Activated B cell treated with CpG ODN at 0.5 μM for 24 hours (primary cell): ENCODE measurements at regions of chr11 and their contacts with region 1.

Region 1: DNA sequence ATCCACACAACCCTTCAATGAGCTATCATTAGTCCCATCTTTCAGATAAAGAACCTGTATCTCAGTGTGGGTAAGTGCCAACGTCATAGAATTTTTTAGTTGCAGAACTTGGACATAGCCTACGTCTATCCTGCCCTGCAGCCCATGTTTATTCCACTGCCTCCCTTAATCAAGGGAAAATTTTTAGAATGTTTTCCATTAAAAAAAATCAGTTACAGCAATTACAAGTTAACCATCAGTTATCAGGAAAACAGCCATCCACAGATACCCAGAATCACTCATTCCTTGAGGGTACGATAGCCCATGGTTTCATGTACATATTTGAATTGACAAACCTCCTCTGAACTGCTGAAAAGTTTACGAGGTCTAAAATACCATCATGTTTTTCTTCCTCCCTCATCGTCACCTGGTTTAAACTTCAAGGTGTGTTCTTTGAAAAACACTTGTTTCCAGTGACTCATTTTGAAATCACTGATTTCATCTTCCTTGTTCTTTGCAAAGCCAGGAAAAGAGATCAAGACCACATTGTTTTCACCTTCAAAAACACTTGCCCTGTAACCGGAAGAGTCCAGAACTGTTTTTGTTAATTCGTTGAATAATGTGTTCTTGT is 100.9 kb downstream of the FAM76B start:
- DNase-seq: no peak
- ATAC-seq: no peak
- H3K4me3 Mint-ChIP-seq: no peak overlapping the region
- H3K27ac Mint-ChIP-seq: no peak overlapping the region
- H3K4me1 Mint-ChIP-seq: peaks cover under 1% of the 10 kb centered on the region
- H3K27me3 Mint-ChIP-seq: no peaks in the 10 kb centered on the region
- CTCF ChIP-seq: no peak

Region 2: GRCh38 chr11:95647355-95647754 is 41.3 kb before region 1 on chr11:
- CTCF ChIA-PET with region 1: no interaction called
- POLR2A ChIA-PET with region 1: interaction called, 3 read pairs
- intact Hi-C with region 1: loop called (anchors 5 kb)
- DNase-seq: no peak
- ATAC-seq: no peak
- H3K4me3 Mint-ChIP-seq: no peak overlapping the region
- H3K27ac Mint-ChIP-seq: no peak overlapping the region
- H3K4me1 Mint-ChIP-seq: peaks cover 5% of the 10 kb centered on the region
- H3K27me3 Mint-ChIP-seq: no peaks in the 10 kb centered on the region
- CTCF ChIP-seq: no peak

Region 3: GRCh38 chr11:95699631-95700470 is 11.2 kb after region 1 on chr11:
- CTCF ChIA-PET with region 1: interaction called, 33 read pairs
- POLR2A ChIA-PET with region 1: interaction called, 19 read pairs
- intact Hi-C with region 1: loop called (anchors 1 kb)
- DNase-seq: no peak
- ATAC-seq: peak; percentile 65
- H3K4me3 Mint-ChIP-seq: peak overlapping the region; percentile 66
- H3K27ac Mint-ChIP-seq: peak overlapping the region; percentile 98
- H3K4me1 Mint-ChIP-seq: peaks cover 52% of the 10 kb centered on the region
- H3K27me3 Mint-ChIP-seq: no peaks in the 10 kb centered on the region
- CTCF ChIP-seq: no peak